Endothelial cell of umbilical vein (primary cell): ENCODE measurements at regions of chr3 and their contacts with region 1.

Region 1: GRCh38 chr3:146577662-146578061 is 27.5 kb downstream of the PLSCR5 start:
- DNase-seq: peak; percentile 76
- H3K4me3 ChIP-seq: no peak overlapping the region
- H3K27ac ChIP-seq: no peak overlapping the region
- H3K4me1 ChIP-seq: no peaks in the 10 kb centered on the region
- H3K27me3 ChIP-seq: no peaks in the 10 kb centered on the region
- CTCF ChIP-seq: peak in 1 of 2 donors; percentile 8
- POLR2A ChIP-seq: no peak

Region 2: GRCh38 chr3:145776782-145777408 is 800.8 kb before region 1 on chr3:
- CTCF ChIA-PET with region 1: interaction called, 21 read pairs
- POLR2A ChIA-PET with region 1: no interaction called
- dilution Hi-C with region 1: no loop called
- intact Hi-C with region 1: loop called (anchors 2 kb)
- DNase-seq: peak; percentile 80
- H3K4me3 ChIP-seq: no peak overlapping the region
- H3K27ac ChIP-seq: no peak overlapping the region
- H3K4me1 ChIP-seq: no peaks in the 10 kb centered on the region
- H3K27me3 ChIP-seq: peaks cover 0 to 3% of the 10 kb centered on the region in 2 experiments
- CTCF ChIP-seq: peak; percentile 53 to 62
- POLR2A ChIP-seq: no peak

Region 3: DNA sequence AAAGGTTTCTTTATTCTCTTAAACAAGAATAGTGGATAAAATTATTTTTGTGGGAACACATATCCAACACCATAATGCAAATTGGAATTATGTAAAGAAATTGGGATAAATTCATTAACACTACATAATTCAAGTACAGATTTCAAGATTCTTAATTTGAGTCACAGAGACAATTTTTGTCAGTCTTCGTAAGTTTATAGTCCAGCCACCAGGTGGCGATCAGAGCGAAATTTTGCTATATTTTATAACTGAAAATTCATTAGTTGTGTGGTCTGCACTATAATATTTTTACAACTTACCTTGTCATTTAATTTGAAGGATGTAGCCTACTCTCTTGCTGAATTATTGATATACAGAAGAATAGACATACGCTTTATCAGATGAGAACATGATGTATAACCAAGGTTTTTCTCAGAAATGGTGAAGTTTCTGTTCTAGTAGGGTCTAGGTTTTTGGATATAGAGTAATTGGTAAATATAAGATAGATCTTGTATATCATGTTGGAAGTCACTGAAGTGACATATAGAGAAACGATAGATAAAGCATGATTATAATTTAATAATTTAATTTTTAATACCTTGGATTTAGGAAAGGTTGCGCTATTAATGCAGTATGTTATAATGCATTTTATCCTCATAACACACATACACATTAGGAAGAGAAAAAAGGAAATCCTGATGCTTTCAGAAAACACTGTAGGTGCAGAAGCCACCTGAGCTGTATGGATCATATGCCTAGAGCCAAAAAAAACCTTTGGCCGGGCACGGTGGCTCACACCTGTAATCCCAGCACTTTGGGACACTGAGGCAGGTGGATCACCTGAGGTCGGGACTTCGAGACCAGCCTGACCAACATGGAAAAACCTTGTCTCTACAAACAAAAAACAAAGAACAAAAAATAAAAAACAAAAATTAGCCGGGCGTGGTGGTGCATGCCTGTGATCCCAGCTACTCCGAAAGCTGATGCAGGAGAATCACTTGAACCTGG is 358.5 kb before region 1 on chr3:
- CTCF ChIA-PET with region 1: interaction called, 10 read pairs
- POLR2A ChIA-PET with region 1: no interaction called
- dilution Hi-C with region 1: no loop called
- intact Hi-C with region 1: loop called (anchors 1 kb)
- DNase-seq: peak; percentile 71
- H3K4me3 ChIP-seq: no peak overlapping the region
- H3K27ac ChIP-seq: peak overlapping the region; percentile 10
- H3K4me1 ChIP-seq: peaks cover 50% of the 10 kb centered on the region
- H3K27me3 ChIP-seq: no peaks in the 10 kb centered on the region
- CTCF ChIP-seq: peak; percentile 37 to 39
- POLR2A ChIP-seq: no peak

Region 4: GRCh38 chr3:146342989-146343388 is 234.7 kb before region 1 on chr3:
- CTCF ChIA-PET with region 1: interaction called, 11 read pairs
- POLR2A ChIA-PET with region 1: no interaction called
- dilution Hi-C with region 1: no loop called
- intact Hi-C with region 1: no loop called
- DNase-seq: no peak
- H3K4me3 ChIP-seq: no peak overlapping the region
- H3K27ac ChIP-seq: no peak overlapping the region
- H3K4me1 ChIP-seq: no peaks in the 10 kb centered on the region
- H3K27me3 ChIP-seq: no peaks in the 10 kb centered on the region
- CTCF ChIP-seq: no peak
- POLR2A ChIP-seq: no peak

Region 5: GRCh38 chr3:146449584-146449983 is 128.1 kb before region 1 on chr3:
- CTCF ChIA-PET with region 1: no interaction called
- POLR2A ChIA-PET with region 1: no interaction called
- dilution Hi-C with region 1: no loop called
- intact Hi-C with region 1: no loop called
- DNase-seq: no peak
- H3K4me3 ChIP-seq: no peak overlapping the region
- H3K27ac ChIP-seq: no peak overlapping the region
- H3K4me1 ChIP-seq: no peaks in the 10 kb centered on the region
- H3K27me3 ChIP-seq: no peaks in the 10 kb centered on the region
- CTCF ChIP-seq: no peak
- POLR2A ChIP-seq: no peak

Region 6: DNA sequence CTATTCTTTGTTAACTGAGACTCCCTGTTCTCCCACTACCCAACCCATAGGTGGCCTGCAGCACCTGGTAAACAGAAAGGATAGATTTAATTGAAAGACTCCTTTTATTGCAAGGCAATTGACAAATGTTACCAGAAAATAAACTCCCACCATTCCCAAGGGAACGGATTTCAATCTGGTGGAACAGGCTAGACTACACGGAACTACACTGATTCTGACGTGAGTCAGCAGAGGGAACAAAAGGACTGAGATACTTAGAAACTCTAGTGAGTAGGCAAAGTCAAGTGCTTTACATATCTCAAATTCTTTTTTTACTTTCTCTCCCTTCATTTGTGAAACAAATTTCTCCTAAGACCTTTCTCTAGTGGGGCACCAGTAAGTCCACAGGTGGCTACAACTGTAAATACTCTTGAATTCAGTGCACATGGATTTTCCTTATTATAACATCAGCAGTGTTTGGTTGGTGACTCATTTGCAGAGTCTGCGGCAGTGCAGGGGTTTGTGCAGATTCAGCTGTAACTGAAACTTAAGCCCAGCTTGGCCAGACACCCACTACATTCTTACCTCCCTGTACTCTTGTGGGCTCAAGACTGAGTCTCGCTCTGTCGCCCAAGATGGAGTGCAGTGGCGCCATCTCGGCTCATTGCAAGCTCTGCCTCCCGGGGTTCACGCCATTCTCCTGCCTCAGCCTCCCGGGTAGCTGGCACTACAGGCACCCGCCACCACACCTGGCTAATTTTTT is 74.0 kb before region 1 on chr3:
- CTCF ChIA-PET with region 1: interaction called, 13 read pairs
- POLR2A ChIA-PET with region 1: no interaction called
- dilution Hi-C with region 1: no loop called
- intact Hi-C with region 1: no loop called
- DNase-seq: peak; percentile 45
- H3K4me3 ChIP-seq: no peak overlapping the region
- H3K27ac ChIP-seq: no peak overlapping the region
- H3K4me1 ChIP-seq: peaks cover 35% of the 10 kb centered on the region
- H3K27me3 ChIP-seq: no peaks in the 10 kb centered on the region
- CTCF ChIP-seq: no peak
- POLR2A ChIP-seq: no peak

Region 7: GRCh38 chr3:146589899-146590508 is 12.3 kb after region 1 on chr3:
- CTCF ChIA-PET with region 1: interaction called, 16 read pairs
- POLR2A ChIA-PET with region 1: interaction called, 3 read pairs
- dilution Hi-C with region 1: no loop called
- intact Hi-C with region 1: no loop called
- DNase-seq: peak; percentile 67
- H3K4me3 ChIP-seq: no peak overlapping the region
- H3K27ac ChIP-seq: no peak overlapping the region
- H3K4me1 ChIP-seq: no peaks in the 10 kb centered on the region
- H3K27me3 ChIP-seq: no peaks in the 10 kb centered on the region
- CTCF ChIP-seq: peak; percentile 23 to 26
- POLR2A ChIP-seq: no peak